Left colon (tissue), 2 donors: ENCODE measurements at regions of chr18 and their contacts with region 1.

Region 1: GRCh38 chr18:29123706-29124530 is 947.0 kb upstream of the CDH2 start:
- DNase-seq: no peak
- ATAC-seq: no peak

Region 2: DNA sequence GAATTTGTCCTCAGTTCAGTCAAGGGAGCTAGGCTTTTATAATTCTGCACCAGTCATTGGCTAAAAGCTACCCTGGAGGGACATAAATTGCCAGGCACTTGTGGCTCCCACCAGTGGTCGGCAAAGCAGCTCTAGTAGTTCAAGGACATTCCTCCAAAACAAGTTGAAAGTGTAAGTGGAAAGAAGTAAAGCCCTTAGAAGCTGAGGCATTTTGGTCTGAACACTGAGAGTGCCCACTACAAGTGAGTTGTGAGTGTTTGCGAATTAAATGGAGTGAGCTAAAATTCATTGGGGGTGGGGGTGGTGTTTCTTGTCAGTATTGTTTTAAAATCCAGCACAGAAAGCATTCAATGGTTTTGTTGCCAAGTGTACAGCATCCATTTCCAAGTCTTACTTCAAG is 67.1 kb before region 1 on chr18:
- intact Hi-C with region 1: loop called in 1 of 2 experiments (anchors 10 kb)
- DNase-seq: no peak
- ATAC-seq: no peak

Region 3: DNA sequence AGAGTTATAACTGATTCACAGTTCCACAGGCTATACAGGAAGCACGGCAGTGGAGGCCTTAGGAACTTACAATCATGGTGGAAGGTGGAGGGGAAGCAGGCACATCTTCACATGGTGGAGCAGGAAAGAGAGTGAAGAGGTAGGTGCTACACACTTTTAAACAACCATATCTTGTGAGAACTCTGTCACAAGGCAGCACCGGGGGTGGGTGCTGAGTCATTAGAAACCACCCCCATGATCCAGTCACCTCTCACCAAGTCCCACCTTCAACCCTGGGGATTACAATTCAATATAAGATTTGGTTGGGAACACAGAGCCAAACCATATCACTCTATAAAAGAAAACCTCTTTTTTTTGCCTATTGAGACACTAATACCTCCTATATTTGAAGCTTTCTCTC is 161.6 kb after region 1 on chr18:
- intact Hi-C with region 1: no loop called
- DNase-seq: no peak
- ATAC-seq: no peak